Body of pancreas (tissue), 4 donors: ENCODE measurements at regions of chr10 and their contacts with region 1.

Region 1: DNA sequence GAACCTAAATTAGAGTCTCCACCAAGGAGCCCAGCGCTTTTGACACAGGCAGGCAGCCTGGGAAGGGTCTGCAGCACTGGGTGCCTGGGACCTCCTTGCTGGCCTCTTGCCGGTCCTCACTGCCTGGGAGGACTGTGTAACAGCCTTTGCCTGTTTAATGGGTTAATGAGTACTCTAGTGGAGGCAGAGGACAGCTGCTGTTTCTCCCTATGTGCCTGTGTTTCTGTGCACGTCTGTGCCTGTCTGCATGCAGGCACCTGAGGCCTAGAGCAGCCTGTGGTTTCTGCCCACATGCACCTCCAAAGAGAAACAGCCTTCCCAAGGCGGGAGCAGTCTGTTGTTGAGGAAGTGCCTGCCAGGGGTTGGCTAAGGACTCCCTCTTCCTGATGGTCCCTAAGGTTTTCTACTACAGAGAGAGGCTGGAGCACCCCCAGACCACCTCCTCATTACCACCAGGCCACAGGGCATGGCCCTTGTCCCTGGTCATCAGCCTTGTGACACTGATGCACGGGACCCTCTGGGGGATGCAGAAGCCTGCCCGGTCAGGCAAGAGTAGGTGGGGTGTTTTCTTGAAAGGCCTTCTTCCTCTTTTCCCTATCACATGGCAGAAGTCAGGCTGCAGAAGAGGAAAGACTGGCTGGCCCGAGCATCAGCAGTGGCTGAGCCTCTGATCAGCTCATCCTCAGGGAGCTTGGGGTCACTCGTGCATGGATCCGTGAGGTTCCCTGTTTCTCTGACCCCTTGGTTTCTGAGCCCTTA is 14.2 kb downstream of the SLC29A3 start:
- DNase-seq: peak in 1 of 4 donors; percentile 40
- ATAC-seq: no peak
- H3K4me3 ChIP-seq: no peak overlapping the region
- H3K27ac ChIP-seq: no peak overlapping the region
- H3K4me1 ChIP-seq: no peaks in the 10 kb centered on the region
- H3K27me3 ChIP-seq: no peaks in the 10 kb centered on the region
- CTCF ChIP-seq: no peak
- POLR2A ChIP-seq: no peak

Region 2: GRCh38 chr10:70693619-70694335 is 639.5 kb before region 1 on chr10:
- intact Hi-C with region 1: no loop called
- DNase-seq: peak in 3 of 4 donors; percentile 18 to 30 (median 28)
- ATAC-seq: no peak
- H3K4me3 ChIP-seq: no peak overlapping the region
- H3K27ac ChIP-seq: no peak overlapping the region
- H3K4me1 ChIP-seq: no peaks in the 10 kb centered on the region
- H3K27me3 ChIP-seq: no peaks in the 10 kb centered on the region
- CTCF ChIP-seq: no peak
- POLR2A ChIP-seq: no peak

Region 3: GRCh38 chr10:71462062-71462935 is 129.0 kb after region 1 on chr10:
- intact Hi-C with region 1: no loop called
- DNase-seq: no peak
- ATAC-seq: no peak
- H3K4me3 ChIP-seq: no peak overlapping the region
- H3K27ac ChIP-seq: no peak overlapping the region
- H3K4me1 ChIP-seq: peaks cover 14% of the 10 kb centered on the region
- H3K27me3 ChIP-seq: no peaks in the 10 kb centered on the region
- CTCF ChIP-seq: no peak
- POLR2A ChIP-seq: no peak

Region 4: GRCh38 chr10:71782917-71783490 is 449.7 kb after region 1 on chr10:
- intact Hi-C with region 1: loop called (anchors 10 kb)
- DNase-seq: no peak
- ATAC-seq: no peak
- H3K4me3 ChIP-seq: no peak overlapping the region
- H3K27ac ChIP-seq: no peak overlapping the region
- H3K4me1 ChIP-seq: no peaks in the 10 kb centered on the region
- H3K27me3 ChIP-seq: no peaks in the 10 kb centered on the region
- CTCF ChIP-seq: no peak
- POLR2A ChIP-seq: no peak